ENCODE measurements at regions of chr1 and their contacts with region 1.

Region 1: DNA sequence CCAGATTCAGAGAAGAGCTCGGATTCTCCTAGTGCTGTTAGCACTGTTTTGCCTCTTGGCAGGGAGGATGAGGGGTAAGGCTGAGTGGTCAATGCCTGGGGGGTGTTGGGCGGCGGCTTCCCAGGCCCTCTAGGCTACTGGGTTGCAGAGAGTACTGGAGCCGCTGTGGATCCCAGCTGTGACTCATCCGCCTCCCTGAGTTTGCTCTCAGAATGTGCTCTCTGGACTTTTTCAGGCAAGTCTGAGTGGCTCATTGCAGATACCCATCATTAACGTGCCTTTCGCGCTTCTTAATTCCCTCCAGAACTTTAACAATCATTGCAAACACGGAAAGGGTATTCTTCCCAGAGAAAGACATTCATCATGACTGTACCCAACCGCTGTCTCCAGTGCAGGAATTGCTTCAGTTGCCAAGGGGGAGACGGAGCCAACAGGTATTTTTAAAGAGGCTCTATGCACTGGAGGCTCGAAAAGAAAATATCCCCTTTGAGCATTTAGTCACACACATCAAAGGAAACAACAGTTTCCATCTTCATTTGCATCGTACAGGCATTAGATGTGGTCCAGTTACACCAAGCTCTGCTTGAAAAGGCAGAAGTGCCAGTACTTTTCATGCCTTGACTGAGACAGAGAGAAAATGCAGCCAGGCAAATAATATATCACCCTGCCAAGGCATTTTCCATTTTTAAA is 14.4 kb upstream of the CAMTA1 start:
- DNase-seq: no peak
- ATAC-seq: peak in 1 of 2 donors; percentile 33
- H3K4me3 ChIP-seq: no peak overlapping the region
- H3K27ac ChIP-seq: no peak overlapping the region
- H3K4me1 ChIP-seq: no peaks in the 10 kb centered on the region
- H3K27me3 ChIP-seq: no peaks in the 10 kb centered on the region

Region 2: DNA sequence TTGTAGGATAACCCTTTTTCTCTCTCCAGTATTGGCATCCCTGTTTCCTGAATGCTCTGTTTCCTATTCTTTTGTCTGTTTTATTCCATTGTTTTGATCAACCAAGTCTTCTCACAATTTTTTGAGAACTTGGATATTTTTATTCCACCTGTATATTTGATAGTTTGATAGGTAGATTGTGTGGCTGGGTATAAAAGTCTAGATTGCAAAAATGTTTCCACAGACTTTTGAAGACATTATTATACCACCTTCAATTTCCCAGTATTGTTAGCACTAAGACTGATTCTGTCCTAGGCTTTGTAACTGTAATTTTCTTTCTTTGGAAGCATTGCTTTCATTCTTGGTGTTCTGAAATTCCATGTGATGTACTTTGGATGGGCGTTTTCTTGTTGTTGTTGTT is 59.7 kb before region 1 on chr1:
- intact Hi-C with region 1: loop called in 1 of 4 experiments (anchors 10 kb)
- DNase-seq: no peak
- ATAC-seq: no peak
- H3K4me3 ChIP-seq: no peak overlapping the region
- H3K27ac ChIP-seq: no peak overlapping the region
- H3K4me1 ChIP-seq: no peaks in the 10 kb centered on the region
- H3K27me3 ChIP-seq: no peaks in the 10 kb centered on the region

Measured in right cardiac atrium (tissue), 5 donors.